ENCODE measurements at regions of chr3 and their contacts with region 1.

Region 1: DNA sequence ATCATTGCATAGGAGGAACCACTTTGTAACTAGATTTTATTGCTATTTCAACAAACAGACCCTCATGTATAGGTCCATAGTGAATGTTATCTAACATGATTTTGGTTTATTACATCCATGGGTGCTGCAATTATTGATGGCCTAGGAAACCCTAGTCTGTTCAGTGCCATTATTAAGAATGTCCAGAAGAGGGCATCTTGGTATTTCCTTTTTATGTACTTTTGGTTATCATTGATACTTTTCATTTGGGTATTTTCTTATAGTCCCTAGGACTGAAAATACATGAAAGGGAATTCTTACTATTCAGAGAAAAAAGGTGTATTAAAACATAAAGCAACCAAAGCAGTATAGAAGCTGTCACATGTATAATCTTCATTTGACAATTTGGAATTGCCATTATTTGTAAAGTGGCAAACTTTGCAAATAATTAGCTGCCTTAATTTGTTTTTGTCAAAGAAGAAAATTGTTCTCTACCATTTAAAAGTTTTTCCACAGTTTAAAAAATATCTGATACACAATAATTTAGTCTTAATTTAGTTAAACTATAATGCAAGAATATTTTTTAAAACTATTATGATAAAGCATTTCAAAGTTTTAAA is 48.7 kb downstream of the CNOT10 start:
- DNase-seq: no peak
- H3K4me3 ChIP-seq: no peak overlapping the region
- H3K27ac ChIP-seq: no peak overlapping the region
- H3K4me1 ChIP-seq: no peaks in the 10 kb centered on the region
- H3K27me3 ChIP-seq: no peaks in the 10 kb centered on the region
- CTCF ChIP-seq: peak; percentile 60

Region 2: DNA sequence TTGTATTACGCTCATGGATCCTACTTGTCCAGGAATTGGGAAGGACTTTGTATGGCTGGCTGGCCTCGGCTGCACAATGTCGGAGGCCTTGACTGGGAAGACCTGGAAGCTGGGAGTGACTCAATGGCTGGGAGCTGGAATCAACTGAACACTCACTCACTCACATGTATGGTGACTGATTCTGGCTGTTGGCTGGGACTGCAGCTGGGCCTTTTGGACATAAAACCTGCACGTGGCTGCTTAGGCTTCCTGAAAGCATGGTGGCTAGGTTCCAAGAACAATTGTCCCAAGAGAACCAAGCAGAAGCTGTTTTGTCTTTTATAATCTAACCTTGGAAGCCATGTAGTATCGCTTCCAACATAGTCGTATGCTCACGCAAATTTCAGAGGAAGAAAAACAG is 533.2 kb before region 1 on chr3:
- CTCF ChIA-PET with region 1: no interaction called
- POLR2A ChIA-PET with region 1: no interaction called
- intact Hi-C with region 1: no loop called
- DNase-seq: no peak
- H3K4me3 ChIP-seq: no peak overlapping the region
- H3K27ac ChIP-seq: no peak overlapping the region
- H3K4me1 ChIP-seq: no peaks in the 10 kb centered on the region
- H3K27me3 ChIP-seq: no peaks in the 10 kb centered on the region
- CTCF ChIP-seq: no peak

Region 3: GRCh38 chr3:32781210-32781968 is 47.7 kb after region 1 on chr3:
- CTCF ChIA-PET with region 1: no interaction called
- POLR2A ChIA-PET with region 1: no interaction called
- intact Hi-C with region 1: loop called (anchors 2 kb)
- DNase-seq: peak; percentile 44 to 83
- H3K4me3 ChIP-seq: peak overlapping the region; percentile 65
- H3K27ac ChIP-seq: no peak overlapping the region
- H3K4me1 ChIP-seq: no peaks in the 10 kb centered on the region
- H3K27me3 ChIP-seq: no peaks in the 10 kb centered on the region
- CTCF ChIP-seq: peak; percentile 57; the same call in 1 of the 2 replicates

Region 4: GRCh38 chr3:32901432-32902409 is 168.0 kb after region 1 on chr3:
- CTCF ChIA-PET with region 1: no interaction called
- POLR2A ChIA-PET with region 1: no interaction called
- intact Hi-C with region 1: loop called (anchors 1 kb)
- DNase-seq: peak in 1 of 2 experiments; percentile 27
- H3K4me3 ChIP-seq: peak overlapping the region; percentile 49; the same call in 1 of the 2 replicates
- H3K27ac ChIP-seq: no peak overlapping the region
- H3K4me1 ChIP-seq: no peaks in the 10 kb centered on the region
- H3K27me3 ChIP-seq: no peaks in the 10 kb centered on the region
- CTCF ChIP-seq: no peak; the same call in 1 of the 2 replicates

Region 5: GRCh38 chr3:32934150-32934742 is 200.5 kb after region 1 on chr3:
- CTCF ChIA-PET with region 1: interaction called, 4 read pairs
- POLR2A ChIA-PET with region 1: no interaction called
- intact Hi-C with region 1: loop called (anchors 1 kb)
- DNase-seq: peak in 1 of 2 experiments; percentile 9
- H3K4me3 ChIP-seq: no peak overlapping the region
- H3K27ac ChIP-seq: no peak overlapping the region
- H3K4me1 ChIP-seq: no peaks in the 10 kb centered on the region
- H3K27me3 ChIP-seq: no peaks in the 10 kb centered on the region
- CTCF ChIP-seq: peak; percentile 64